Common myeloid progenitor, CD34-positive (primary cell): ENCODE measurements at regions of chr1 and their contacts with region 1.

Region 1: GRCh38 chr1:93171549-93172034 is 8.6 kb downstream of the TMED5 start:
- DNase-seq: no peak
- H3K4me3 ChIP-seq: peak overlapping the region in 6 of 7 experiments; percentile 13 to 59 (median 54)
- H3K27ac ChIP-seq: no peak overlapping the region
- H3K4me1 ChIP-seq: peaks cover 7 to 27% (median 14%) of the 10 kb centered on the region in 4 experiments
- H3K27me3 ChIP-seq: no peaks in the 10 kb centered on the region

Region 2: DNA sequence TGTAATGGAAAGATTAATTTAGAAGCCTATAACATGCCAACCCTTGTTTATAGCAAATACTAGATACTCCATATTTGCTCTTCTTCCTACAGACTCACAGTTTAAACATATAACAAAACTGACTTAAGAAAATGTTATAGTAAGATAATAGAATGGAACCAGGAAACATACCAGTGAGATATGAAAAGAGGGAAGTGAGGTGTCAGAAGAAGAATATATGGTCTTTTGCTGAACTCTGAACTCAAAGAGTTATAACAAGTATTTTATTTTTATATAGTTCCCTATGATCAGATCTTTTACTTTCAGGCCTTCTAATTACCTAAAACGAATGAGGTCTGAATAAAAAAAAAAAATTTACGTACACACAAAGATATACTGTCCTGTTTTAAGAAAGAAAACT is 12.3 kb before region 1 on chr1:
- CTCF ChIA-PET with region 1: interaction called, 10 read pairs
- POLR2A ChIA-PET with region 1: interaction called, 3 read pairs
- DNase-seq: peak in 2 of 3 donors; percentile 23 to 58
- H3K4me3 ChIP-seq: no peak overlapping the region
- H3K27ac ChIP-seq: peak overlapping the region; percentile 5 to 43
- H3K4me1 ChIP-seq: peaks cover 3 to 23% (median 13%) of the 10 kb centered on the region in 4 experiments
- H3K27me3 ChIP-seq: no peaks in the 10 kb centered on the region